Breast epithelium (tissue), 4 donors: ENCODE measurements at regions of chr15 and their contacts with region 1.

Region 1: DNA sequence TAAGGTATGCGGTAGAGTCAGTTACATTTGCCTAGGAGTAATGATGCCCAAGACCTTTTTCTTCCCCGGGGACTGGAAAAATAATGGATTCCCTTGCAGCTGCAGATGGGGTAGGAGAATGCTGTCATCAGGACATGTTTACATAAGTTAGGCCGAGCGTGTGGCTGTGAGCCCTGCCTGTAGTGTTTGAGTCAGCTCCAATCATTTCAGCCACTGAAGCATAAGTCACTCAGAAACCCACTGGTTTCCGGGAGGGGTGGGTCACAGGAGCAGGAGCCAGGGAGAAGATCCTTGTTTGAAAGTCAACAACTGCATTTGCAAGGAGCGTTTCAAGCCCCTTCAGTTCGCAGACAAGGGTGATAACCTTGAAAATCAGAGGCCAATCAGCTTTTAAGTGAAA is 562.3 kb downstream of the MCTP2 start:
- DNase-seq: no peak
- H3K4me3 ChIP-seq: no peak overlapping the region
- H3K27ac ChIP-seq: no peak overlapping the region
- H3K4me1 ChIP-seq: no peaks in the 10 kb centered on the region
- H3K27me3 ChIP-seq: no peaks in the 10 kb centered on the region
- CTCF ChIP-seq: no peak
- POLR2A ChIP-seq: no peak

Region 2: GRCh38 chr15:93179072-93179471 is 1614.6 kb before region 1 on chr15:
- intact Hi-C with region 1: no loop called
- DNase-seq: no peak
- H3K4me3 ChIP-seq: no peak overlapping the region
- H3K27ac ChIP-seq: no peak overlapping the region
- H3K4me1 ChIP-seq: no peaks in the 10 kb centered on the region
- H3K27me3 ChIP-seq: no peaks in the 10 kb centered on the region
- CTCF ChIP-seq: no peak
- POLR2A ChIP-seq: no peak

Region 3: GRCh38 chr15:96750361-96750760 is 1956.7 kb after region 1 on chr15:
- intact Hi-C with region 1: loop called (anchors 10 kb)
- DNase-seq: no peak
- H3K4me3 ChIP-seq: no peak overlapping the region
- H3K27ac ChIP-seq: no peak overlapping the region
- H3K4me1 ChIP-seq: no peaks in the 10 kb centered on the region
- H3K27me3 ChIP-seq: no peaks in the 10 kb centered on the region
- CTCF ChIP-seq: no peak
- POLR2A ChIP-seq: no peak